Tibial artery (tissue), 4 donors: ENCODE measurements at regions of chr10 and their contacts with region 1.

Region 1: DNA sequence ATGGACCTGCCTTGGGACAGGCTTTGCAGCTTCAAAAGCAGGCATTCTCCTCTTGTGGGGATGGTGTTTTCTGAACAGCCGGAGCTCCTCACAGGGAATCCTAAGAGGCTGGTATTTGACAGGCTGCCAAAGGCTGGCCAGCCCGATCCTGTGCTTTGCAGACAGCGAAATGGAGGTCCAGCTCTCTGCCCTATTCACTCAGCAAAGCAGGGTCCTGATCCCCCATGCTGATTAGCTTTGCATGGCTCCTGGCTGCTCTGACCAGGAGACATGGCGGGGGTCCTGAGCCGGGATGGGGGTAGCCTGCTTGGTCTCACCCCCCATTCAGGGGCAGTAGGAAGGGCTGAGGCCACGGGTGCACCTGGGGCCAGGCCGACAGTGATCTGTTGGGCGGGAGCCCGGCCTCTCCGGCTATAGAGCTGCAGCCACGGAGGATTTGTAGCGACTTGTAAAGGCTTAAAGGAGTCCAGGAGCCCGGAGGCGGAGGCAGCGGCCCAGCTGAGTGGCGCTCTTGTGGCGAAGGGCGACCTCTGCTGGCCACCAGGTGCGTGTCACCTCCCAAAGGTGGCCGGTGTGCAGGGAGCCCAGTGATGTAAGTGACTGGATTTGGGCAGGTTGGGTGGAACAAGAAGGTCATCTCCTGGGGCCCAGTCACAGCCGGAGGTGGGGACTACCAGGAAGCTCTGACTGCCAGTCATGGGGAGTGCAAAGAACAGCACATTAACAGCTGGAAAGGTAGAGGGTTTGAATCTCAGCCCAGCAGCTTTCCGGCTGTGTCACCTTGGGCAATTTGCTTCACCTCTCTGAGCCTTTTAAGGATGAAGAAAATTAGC is 126.5 kb downstream of the ZMIZ1 start:
- DNase-seq: peak; percentile 85 to 94
- H3K4me3 ChIP-seq: peak overlapping the region in 1 of 2 donors; percentile 13
- H3K27ac ChIP-seq: peak overlapping the region; percentile 54 to 72
- H3K4me1 ChIP-seq: peaks cover 0 to 31% (median 17%) of the 10 kb centered on the region in 4 donors
- H3K27me3 ChIP-seq: no peaks in the 10 kb centered on the region
- CTCF ChIP-seq: peak; percentile 95 to 97

Region 2: GRCh38 chr10:78047314-78047891 is 1147.9 kb before region 1 on chr10:
- intact Hi-C with region 1: loop called (anchors 5 kb)
- DNase-seq: peak; percentile 88
- H3K4me3 ChIP-seq: no peak overlapping the region
- H3K27ac ChIP-seq: no peak overlapping the region
- H3K4me1 ChIP-seq: peaks cover 0 to 18% (median 8%) of the 10 kb centered on the region in 4 donors
- H3K27me3 ChIP-seq: no peaks in the 10 kb centered on the region
- CTCF ChIP-seq: peak; percentile 89 to 90

Region 3: DNA sequence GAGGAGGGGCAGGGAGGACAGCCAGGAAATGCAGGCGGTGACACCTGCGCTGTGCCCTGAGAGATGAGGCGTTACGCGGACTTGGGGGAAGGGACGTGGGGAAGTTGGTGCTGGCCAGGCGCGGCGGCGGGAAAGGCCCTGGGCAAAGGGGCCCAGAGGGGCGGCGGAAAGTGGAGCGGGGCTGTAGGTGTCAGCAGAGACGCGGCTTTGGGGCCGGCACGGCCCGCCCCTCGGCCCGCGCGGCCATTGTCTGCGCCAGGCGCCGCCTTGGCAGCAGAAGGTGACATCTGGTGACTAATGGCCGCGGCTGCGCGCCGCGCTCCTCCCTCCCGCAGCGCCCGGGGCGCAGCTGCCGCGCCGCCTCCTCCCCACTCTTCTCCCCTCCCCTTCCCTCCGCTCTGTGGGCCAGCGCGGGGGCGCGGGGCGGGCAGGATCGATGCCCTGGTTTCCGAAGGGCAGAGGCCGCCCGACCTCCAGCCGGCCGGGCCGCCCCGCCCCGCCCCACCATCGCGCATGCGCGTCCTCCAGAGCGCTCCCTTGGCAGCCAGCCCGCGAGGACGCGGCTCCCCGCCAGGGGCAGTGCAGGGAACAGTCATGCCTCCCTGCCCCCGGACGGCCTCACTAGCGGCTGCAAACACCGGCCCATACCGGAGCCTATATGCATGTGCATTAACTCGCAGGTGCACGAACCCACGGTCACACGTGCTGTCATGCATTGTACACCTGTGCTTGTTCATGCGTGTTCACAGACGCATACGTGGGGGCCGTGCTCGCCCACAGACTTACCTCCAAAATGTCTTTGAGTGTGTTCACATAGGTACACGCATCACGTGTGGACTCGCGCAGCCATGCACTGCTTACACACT is 892.1 kb before region 1 on chr10:
- intact Hi-C with region 1: loop called (anchors 5 kb)
- DNase-seq: peak; percentile 90 to 96
- H3K4me3 ChIP-seq: peak overlapping the region; percentile 60
- H3K27ac ChIP-seq: peak overlapping the region; percentile 78 to 89
- H3K4me1 ChIP-seq: peaks cover 4 to 14% (median 10%) of the 10 kb centered on the region in 4 donors
- H3K27me3 ChIP-seq: no peaks in the 10 kb centered on the region
- CTCF ChIP-seq: peak; percentile 74 to 87

Region 4: GRCh38 chr10:78657163-78657861 is 538.0 kb before region 1 on chr10:
- intact Hi-C with region 1: loop called (anchors 5 kb)
- DNase-seq: peak; percentile 83 to 88
- H3K4me3 ChIP-seq: no peak overlapping the region
- H3K27ac ChIP-seq: no peak overlapping the region
- H3K4me1 ChIP-seq: no peaks in the 10 kb centered on the region
- H3K27me3 ChIP-seq: no peaks in the 10 kb centered on the region
- CTCF ChIP-seq: peak; percentile 58 to 67

Region 5: GRCh38 chr10:79068562-79069324 is 126.6 kb before region 1 on chr10 and contains the start of gene ZMIZ1:
- intact Hi-C with region 1: loop called (anchors 5 kb)
- DNase-seq: peak; percentile 94 to 95
- H3K4me3 ChIP-seq: peak within 1 kb of the TSS; percentile 70 to 95
- H3K27ac ChIP-seq: peak within 1 kb of the TSS; percentile 97 to 100
- H3K4me1 ChIP-seq: peaks cover 9 to 49% (median 37%) of the 10 kb centered on the region in 4 donors
- H3K27me3 ChIP-seq: no peaks in the 10 kb centered on the region
- CTCF ChIP-seq: peak; percentile 2 to 24

Region 6: GRCh38 chr10:79127151-79127961 is 68.0 kb before region 1 on chr10:
- intact Hi-C with region 1: no loop called
- DNase-seq: peak; percentile 85 to 90
- H3K4me3 ChIP-seq: no peak overlapping the region
- H3K27ac ChIP-seq: no peak overlapping the region
- H3K4me1 ChIP-seq: peaks cover 0 to 47% (median 31%) of the 10 kb centered on the region in 4 donors
- H3K27me3 ChIP-seq: no peaks in the 10 kb centered on the region
- CTCF ChIP-seq: no peak

Region 7: DNA sequence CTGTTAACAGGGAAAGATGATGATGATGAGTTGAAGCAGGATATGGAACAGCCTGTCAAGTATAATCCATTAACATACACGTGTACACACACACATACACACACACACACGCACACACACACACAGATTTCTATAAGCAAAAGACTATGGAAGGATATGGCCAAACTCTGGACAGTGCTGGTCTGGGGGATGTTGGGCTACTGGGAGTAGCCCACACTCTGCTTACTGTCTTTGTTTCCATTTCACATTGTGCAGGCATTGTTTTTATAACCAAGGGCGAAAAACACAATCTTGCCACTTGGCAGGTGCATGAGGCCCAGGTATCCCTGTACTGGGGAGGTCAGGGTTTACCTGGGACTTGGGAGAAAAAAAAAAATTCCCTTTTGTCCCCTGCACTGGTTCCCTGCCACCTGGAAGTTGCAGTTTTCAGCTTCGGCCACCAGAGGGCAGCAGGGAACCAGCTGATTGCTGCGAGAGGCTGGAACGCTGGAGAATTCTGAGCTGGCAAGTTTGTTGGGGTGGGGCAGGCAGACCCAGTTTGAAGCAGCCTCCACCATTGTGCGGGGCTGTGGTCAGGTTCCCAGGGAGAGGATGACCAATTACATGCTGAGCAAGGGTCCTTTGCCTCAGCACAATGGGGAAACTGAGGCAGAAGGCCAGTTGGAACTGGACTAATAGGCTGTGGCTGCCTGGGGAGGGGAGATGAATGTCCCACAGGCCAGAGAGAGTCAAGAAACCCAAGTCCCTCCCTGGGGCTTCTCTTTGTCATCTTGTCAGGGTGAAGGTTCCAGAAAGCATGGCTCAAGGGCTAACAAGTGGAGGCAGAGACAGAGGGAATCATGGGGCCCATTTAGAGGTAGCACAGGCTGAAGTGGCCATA is 179.2 kb after region 1 on chr10:
- intact Hi-C with region 1: no loop called
- DNase-seq: peak; percentile 77 to 88
- H3K4me3 ChIP-seq: no peak overlapping the region
- H3K27ac ChIP-seq: no peak overlapping the region
- H3K4me1 ChIP-seq: peaks cover 0 to 14% (median 11%) of the 10 kb centered on the region in 4 donors
- H3K27me3 ChIP-seq: no peaks in the 10 kb centered on the region
- CTCF ChIP-seq: peak; percentile 96 to 98